Posterior cingulate gyrus (tissue), 11 donors: ENCODE measurements at regions of chr3 and their contacts with region 1.

Region 1: GRCh38 chr3:45929042-45929679 is 14.1 kb upstream of the CXCR6 start:
- DNase-seq: peak; percentile 28 to 93 (median 61)

Region 2: DNA sequence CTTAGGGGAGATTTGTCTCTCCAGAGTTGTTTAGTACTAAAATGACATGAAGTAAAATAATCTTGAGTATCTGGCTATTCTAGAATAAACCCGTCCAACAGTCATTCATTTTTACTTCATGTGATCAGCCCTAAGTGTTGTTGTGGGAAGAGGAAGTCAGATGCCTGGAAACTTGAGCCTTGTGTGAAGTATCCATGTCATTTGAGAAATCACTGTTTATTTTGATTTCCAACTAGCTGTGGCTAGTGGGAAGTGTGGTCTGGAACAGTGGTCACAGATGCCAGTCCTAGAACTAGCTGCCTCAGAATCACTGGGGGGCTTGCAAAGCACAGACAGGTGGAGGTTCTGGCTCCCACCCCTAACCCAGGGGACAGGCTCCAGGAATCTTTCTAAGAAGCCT is 412.3 kb before region 1 on chr3:
- intact Hi-C with region 1: no loop called
- DNase-seq: no peak

Region 3: GRCh38 chr3:45553996-45554666 is 375.0 kb before region 1 on chr3:
- intact Hi-C with region 1: no loop called
- DNase-seq: no peak

Region 4: GRCh38 chr3:45760878-45761711 is 168.1 kb before region 1 on chr3:
- intact Hi-C with region 1: loop called (anchors 5 kb)
- DNase-seq: peak in 5 of 10 donors; percentile 26 to 93 (median 41)

Region 5: DNA sequence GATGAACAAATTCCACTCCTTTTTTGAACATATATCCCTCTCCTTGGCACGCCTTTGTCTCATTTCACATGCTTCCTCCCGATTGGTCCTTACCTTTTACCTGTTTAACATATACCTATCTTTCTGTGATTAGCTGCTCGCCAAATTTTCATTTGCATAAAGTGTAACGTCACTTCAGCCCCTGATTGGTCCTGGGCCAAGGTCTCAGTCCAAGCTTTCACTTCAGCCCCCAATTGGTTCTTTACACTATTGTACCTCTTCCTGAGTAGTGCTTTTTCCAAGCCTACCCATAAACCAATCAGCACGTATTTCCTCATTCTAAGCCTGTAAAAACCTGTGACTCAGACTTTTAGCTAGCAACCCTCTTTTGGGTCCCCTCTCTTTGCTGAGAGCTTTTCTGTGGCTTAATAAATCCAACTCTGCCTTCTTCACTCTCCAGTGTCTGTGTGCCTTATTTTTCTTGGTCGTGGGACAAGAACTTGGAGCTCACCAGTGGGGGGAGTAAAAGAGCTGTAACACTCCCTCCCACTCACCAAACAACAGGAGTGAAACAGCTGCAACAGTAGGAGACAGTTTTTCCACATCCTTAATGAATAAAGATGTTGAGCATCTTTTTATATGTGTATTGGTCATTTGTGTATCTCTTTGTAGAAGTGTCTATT is 98.7 kb after region 1 on chr3:
- intact Hi-C with region 1: no loop called
- DNase-seq: no peak